ENCODE measurements at regions of chr15 and their contacts with region 1.

Region 1: DNA sequence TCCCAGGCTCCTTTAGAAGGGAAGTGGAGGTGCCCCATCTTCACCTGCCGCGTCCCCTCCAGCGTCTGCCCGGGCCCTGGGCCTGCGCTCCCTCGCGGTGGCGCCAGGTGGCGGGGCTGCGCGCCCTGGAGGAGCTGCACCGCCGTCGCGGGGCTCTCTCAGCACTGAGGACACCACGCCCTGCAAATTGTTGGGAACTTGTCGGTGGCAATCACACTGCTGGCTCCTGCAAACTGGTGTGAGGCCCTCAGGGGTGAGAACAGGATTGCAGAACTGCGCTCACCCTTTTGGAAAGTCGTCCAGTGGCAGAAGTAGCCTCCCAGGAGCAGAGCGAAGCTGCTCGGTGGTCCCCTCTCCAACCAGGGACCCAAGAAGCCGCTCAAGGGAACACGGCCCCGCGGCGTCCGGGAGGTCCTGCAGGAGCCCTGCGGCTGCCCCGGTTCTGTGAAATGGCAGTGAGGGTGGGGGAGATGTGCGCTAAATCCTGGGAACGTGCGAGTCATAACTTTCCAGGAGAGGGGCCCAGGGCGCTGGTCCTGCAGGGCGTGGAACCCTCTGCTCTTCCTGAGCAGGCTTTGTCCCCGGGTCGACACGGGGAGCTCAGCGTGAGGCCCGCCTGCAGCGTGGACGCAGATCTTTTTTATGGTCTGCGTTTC is 995 bp upstream of the LRRK1 start:
- DNase-seq: peak; percentile 76
- ATAC-seq: peak; percentile 95
- H3K4me3 Mint-ChIP-seq: peak overlapping the region; percentile 70
- H3K27ac Mint-ChIP-seq: no peak overlapping the region
- H3K4me1 Mint-ChIP-seq: peaks cover 22% of the 10 kb centered on the region
- H3K27me3 Mint-ChIP-seq: peaks cover 66% of the 10 kb centered on the region

Region 2: GRCh38 chr15:100905850-100906249 is 12.3 kb before region 1 on chr15:
- CTCF ChIA-PET with region 1: interaction called, 17 read pairs
- POLR2A ChIA-PET with region 1: no interaction called
- DNase-seq: no peak
- ATAC-seq: no peak
- H3K4me3 Mint-ChIP-seq: no peak overlapping the region
- H3K27ac Mint-ChIP-seq: no peak overlapping the region
- H3K4me1 Mint-ChIP-seq: no peaks in the 10 kb centered on the region
- H3K27me3 Mint-ChIP-seq: peaks cover 10% of the 10 kb centered on the region

Measured in activated CD8-positive, alpha-beta T cell treated with anti-CD3 and anti-CD28 coated beads, Interleukin-2, amount 10 ng/mL, durations not matched to agents 7 days and 5 days (primary cell).